Activated CD8-positive, alpha-beta memory T cell treated with anti-CD3 and anti-CD28 coated beads, Interleukin-2, amount 10 ng/mL, durations not matched to agents 7 days and 5 days (primary cell): ENCODE measurements at regions of chr1 and their contacts with region 1.

Region 1: GRCh38 chr1:226121587-226122400 is 59.3 kb downstream of the H3-3A start:
- DNase-seq: peak; percentile 77
- ATAC-seq: peak; percentile 82
- H3K4me3 Mint-ChIP-seq: peak overlapping the region; percentile 70
- H3K27ac Mint-ChIP-seq: peak overlapping the region; percentile 83
- H3K4me1 Mint-ChIP-seq: peaks cover 30% of the 10 kb centered on the region
- H3K27me3 Mint-ChIP-seq: no peaks in the 10 kb centered on the region

Region 2: GRCh38 chr1:225896937-225897549 is 224.8 kb before region 1 on chr1:
- CTCF ChIA-PET with region 1: no interaction called
- DNase-seq: peak; percentile 89
- ATAC-seq: peak; percentile 96
- H3K4me3 Mint-ChIP-seq: peak overlapping the region; percentile 22
- H3K27ac Mint-ChIP-seq: peak overlapping the region; percentile 29
- H3K4me1 Mint-ChIP-seq: peaks cover 29% of the 10 kb centered on the region
- H3K27me3 Mint-ChIP-seq: peaks cover 24% of the 10 kb centered on the region

Region 3: DNA sequence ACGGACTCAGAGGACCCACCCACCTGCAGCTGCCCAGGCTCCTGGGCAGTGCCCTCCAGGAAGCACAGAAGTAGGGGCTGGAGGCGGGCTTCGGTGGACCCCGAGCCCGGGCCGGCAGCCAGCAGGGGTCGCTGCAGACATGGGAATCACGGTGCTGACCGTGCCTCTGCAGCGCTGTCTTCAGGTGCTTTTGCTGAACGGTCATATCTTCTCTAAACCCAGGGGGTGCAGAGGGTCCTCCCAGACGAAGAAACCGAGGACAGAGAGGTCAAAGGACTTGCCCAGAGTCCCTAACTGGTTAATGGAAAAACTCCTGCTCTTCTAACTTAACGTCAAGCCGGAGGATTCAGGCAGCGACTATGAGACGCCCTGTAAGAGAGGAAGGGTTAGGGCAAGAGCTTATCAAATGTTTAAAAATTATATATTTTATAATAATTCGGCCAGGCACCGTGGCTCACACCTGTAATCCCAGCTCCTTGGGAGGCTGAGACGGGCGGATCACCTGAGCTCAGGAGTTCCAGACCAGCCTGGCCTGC is 159.3 kb before region 1 on chr1:
- CTCF ChIA-PET with region 1: interaction called, 12 read pairs
- DNase-seq: peak; percentile 72
- ATAC-seq: peak; percentile 92
- H3K4me3 Mint-ChIP-seq: no peak overlapping the region
- H3K27ac Mint-ChIP-seq: no peak overlapping the region
- H3K4me1 Mint-ChIP-seq: no peaks in the 10 kb centered on the region
- H3K27me3 Mint-ChIP-seq: peaks cover 11% of the 10 kb centered on the region

Region 4: DNA sequence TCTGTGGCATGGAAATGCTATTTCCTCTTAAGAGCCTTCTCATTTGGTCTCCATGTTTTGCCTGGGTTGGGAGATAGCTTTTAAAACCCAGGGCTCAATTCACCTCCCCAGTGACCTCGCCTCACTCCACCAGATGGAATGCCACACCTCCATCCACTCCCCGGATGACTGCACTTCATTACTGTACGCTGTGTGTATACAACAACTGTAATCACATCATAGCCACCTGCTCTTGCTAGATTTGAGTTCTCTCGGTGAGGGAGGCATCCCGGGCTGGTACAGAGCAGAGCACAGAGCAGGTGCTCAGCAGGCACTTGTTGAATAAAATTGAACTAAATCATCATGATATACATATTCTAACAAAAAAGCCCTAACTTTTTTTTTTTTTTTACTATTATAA is 148.6 kb before region 1 on chr1:
- CTCF ChIA-PET with region 1: no interaction called
- DNase-seq: no peak
- ATAC-seq: no peak
- H3K4me3 Mint-ChIP-seq: no peak overlapping the region
- H3K27ac Mint-ChIP-seq: no peak overlapping the region
- H3K4me1 Mint-ChIP-seq: peaks cover 12% of the 10 kb centered on the region
- H3K27me3 Mint-ChIP-seq: no peaks in the 10 kb centered on the region

Region 5: GRCh38 chr1:226046240-226046639 is 75.6 kb before region 1 on chr1:
- CTCF ChIA-PET with region 1: no interaction called
- DNase-seq: no peak
- ATAC-seq: no peak
- H3K4me3 Mint-ChIP-seq: no peak overlapping the region
- H3K27ac Mint-ChIP-seq: no peak overlapping the region
- H3K4me1 Mint-ChIP-seq: peaks cover 4% of the 10 kb centered on the region
- H3K27me3 Mint-ChIP-seq: peaks cover 5% of the 10 kb centered on the region

Region 6: DNA sequence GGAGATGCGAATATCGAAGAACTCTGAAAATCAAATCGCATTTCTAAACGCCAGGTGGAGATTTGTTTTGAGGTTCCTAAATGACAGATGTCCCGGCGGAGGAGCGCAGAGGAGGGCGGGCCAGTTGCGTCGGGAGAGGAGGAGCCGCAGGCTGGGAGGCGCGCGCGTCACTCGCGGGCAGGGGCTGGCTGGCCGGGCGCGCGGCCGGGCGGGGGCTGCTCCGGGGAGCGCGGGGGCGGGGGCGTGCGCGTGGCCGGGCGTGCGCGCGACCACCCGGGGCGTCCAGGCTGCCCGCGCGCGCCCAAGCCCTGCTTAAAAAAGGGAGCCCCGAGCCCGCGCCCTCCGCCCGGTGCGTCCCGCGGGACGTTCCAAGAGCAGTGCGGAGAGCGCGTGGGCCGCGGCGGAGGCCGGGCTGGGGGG is 12.0 kb before region 1 on chr1:
- CTCF ChIA-PET with region 1: interaction called, 30 read pairs
- DNase-seq: peak; percentile 88
- ATAC-seq: peak; percentile 87
- H3K4me3 Mint-ChIP-seq: peak overlapping the region; percentile 78
- H3K27ac Mint-ChIP-seq: peak overlapping the region; percentile 73
- H3K4me1 Mint-ChIP-seq: peaks cover 13% of the 10 kb centered on the region
- H3K27me3 Mint-ChIP-seq: no peaks in the 10 kb centered on the region

Region 7: DNA sequence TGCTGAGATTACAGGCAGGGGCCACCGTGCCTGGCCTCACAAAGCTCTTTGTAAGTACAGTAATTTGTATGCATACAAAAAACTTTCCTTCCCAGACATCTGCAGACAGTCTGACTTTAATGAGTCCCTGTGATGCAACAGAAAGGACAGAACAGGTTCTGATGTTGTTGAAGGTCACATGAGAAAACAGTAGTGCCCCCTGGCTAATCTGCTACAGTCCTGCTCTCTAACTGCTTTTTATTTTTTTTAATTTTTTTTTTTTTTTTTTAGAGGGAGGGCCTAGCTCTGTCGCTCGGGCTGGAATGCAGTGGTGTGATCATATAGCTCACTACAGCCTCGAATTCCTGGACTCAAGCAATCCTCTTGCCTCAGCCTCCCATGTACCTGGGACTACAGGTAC is 28.0 kb after region 1 on chr1:
- CTCF ChIA-PET with region 1: interaction called, 19 read pairs
- DNase-seq: no peak
- ATAC-seq: no peak
- H3K4me3 Mint-ChIP-seq: no peak overlapping the region
- H3K27ac Mint-ChIP-seq: no peak overlapping the region
- H3K4me1 Mint-ChIP-seq: peaks cover 4% of the 10 kb centered on the region
- H3K27me3 Mint-ChIP-seq: no peaks in the 10 kb centered on the region

Region 8: DNA sequence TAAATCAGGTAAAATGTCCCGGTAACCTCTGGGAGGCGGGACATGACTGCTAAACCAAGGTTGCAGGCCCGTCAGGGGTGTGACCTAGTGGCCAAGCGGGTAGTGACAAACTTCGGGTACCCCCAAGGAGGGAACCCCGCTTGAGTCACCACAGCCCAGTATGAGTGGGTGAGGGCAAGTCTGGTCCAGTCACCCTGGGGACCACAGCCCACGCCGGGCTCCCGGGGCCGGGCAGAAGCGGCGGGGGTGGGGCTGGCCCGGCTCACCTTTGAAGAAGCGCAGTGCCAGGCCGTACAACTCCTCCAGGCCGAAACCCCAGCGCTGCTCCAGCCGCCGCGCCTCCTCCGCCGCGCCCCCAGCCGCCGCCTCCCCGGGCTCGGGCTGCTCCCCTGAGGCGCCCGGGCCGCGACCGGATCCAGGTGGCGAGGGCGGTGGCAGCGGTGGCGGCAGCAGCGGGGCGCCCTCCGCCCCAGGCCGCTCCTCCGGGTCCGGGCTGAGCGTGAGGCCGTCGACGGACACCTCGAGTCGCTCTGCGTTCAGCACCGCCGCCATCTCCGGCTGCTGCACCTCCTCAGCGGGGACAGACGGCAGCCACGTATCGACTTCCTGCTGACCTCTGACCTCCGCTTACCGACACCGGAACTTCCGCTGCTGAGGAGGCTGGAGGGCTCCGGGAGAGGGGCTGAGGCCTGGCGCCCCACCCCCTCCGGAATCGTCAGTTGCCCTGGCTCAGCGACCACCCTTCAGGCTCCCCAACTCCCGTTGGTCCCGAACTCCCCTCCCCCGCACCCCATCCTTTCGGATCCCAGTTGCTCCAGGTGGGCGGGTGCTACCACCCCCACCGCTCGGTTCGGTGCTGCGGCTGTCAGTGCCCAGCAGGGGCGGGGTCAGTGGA is 64.6 kb after region 1 on chr1 and contains the start of gene ACBD3:
- CTCF ChIA-PET with region 1: interaction called, 31 read pairs
- DNase-seq: peak; percentile 93
- ATAC-seq: peak; percentile 97
- H3K4me3 Mint-ChIP-seq: peak within 1 kb of the TSS; percentile 97
- H3K27ac Mint-ChIP-seq: peak within 1 kb of the TSS; percentile 93
- H3K4me1 Mint-ChIP-seq: peaks cover 32% of the 10 kb centered on the region
- H3K27me3 Mint-ChIP-seq: no peaks in the 10 kb centered on the region
- total RNA-seq, gene ACBD3: 19.4 to 20.0 TPM

Region 9: GRCh38 chr1:226248091-226248490 is 126.3 kb after region 1 on chr1:
- CTCF ChIA-PET with region 1: no interaction called
- DNase-seq: no peak
- ATAC-seq: no peak
- H3K4me3 Mint-ChIP-seq: no peak overlapping the region
- H3K27ac Mint-ChIP-seq: no peak overlapping the region
- H3K4me1 Mint-ChIP-seq: no peaks in the 10 kb centered on the region
- H3K27me3 Mint-ChIP-seq: no peaks in the 10 kb centered on the region

Region 10: GRCh38 chr1:226308723-226309315 is 187.0 kb after region 1 on chr1 and contains the start of gene LIN9:
- CTCF ChIA-PET with region 1: interaction called, 22 read pairs
- DNase-seq: peak; percentile 96
- ATAC-seq: peak; percentile 87
- H3K4me3 Mint-ChIP-seq: peak within 1 kb of the TSS; percentile 88
- H3K27ac Mint-ChIP-seq: peak within 1 kb of the TSS; percentile 88
- H3K4me1 Mint-ChIP-seq: peaks cover 27% of the 10 kb centered on the region
- H3K27me3 Mint-ChIP-seq: peaks cover 21% of the 10 kb centered on the region
- total RNA-seq, gene LIN9: 10.8 to 14.3 TPM

Region 11: GRCh38 chr1:226407497-226408284 is 285.9 kb after region 1 on chr1 and contains the start of gene PARP1:
- CTCF ChIA-PET with region 1: interaction called, 24 read pairs
- DNase-seq: peak; percentile 92
- ATAC-seq: peak; percentile 89
- H3K4me3 Mint-ChIP-seq: peak within 1 kb of the TSS; percentile 99
- H3K27ac Mint-ChIP-seq: peak within 1 kb of the TSS; percentile 97
- H3K4me1 Mint-ChIP-seq: peaks cover 31% of the 10 kb centered on the region
- H3K27me3 Mint-ChIP-seq: peaks cover 7% of the 10 kb centered on the region
- total RNA-seq, gene PARP1: 185 to 207 TPM